GM10248 (cell line): ENCODE measurements at regions of chr2 and their contacts with region 1.

Region 1: DNA sequence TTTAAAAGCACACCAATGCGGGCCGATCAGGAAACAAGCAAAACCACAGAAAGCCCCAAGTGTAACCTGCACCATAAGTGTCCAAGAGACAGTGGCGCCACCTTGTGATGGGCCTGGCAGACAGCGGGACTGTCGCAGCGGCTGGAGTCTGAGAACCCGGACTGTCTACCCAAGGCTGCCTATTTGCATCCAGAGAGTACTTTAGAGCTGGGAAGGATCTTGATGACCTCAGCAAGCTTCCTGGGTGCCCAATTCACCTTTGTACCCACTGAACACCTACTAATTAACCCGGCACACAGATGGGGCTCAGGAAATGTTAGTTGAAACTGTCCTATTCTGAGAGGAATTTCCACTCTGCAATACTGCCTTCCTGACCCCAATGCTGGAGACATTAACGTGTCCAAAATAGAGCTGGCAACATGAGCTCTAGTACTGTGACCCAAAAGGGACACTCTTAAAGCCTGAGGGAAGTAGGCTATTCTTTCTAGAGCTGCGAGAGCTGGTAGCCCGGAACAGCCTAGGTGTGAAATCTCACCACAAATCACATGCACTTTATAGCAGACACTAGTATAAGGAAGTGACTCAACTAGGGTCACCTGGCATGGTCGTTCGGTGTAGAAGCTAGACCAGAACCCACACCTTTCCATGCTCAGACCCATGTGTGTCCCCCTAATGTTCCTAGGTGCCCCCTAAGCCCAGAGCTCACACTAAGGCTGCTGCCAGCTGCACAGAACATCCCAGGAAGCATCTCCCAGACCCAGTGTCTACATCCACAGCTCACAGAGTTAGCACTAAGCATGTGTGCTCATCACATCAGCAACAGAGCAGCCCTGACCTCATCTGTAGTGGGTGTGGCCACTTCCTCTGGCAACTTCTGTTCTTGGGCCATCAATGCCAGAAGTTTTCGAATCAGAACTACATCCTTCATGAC is 25.4 kb downstream of the POLR1A start:
- DNase-seq: peak; percentile 75
- CTCF ChIP-seq: peak; percentile 90

Region 2: GRCh38 chr2:85813982-85814801 is 266.1 kb before region 1 on chr2:
- CTCF ChIA-PET with region 1: interaction called, 13 read pairs
- POLR2A ChIA-PET with region 1: no interaction called
- DNase-seq: peak; percentile 89
- CTCF ChIP-seq: peak; percentile 92

Region 3: GRCh38 chr2:85852937-85853498 is 227.2 kb before region 1 on chr2:
- CTCF ChIA-PET with region 1: interaction called, 14 read pairs
- POLR2A ChIA-PET with region 1: no interaction called
- DNase-seq: no peak
- CTCF ChIP-seq: no peak

Region 4: DNA sequence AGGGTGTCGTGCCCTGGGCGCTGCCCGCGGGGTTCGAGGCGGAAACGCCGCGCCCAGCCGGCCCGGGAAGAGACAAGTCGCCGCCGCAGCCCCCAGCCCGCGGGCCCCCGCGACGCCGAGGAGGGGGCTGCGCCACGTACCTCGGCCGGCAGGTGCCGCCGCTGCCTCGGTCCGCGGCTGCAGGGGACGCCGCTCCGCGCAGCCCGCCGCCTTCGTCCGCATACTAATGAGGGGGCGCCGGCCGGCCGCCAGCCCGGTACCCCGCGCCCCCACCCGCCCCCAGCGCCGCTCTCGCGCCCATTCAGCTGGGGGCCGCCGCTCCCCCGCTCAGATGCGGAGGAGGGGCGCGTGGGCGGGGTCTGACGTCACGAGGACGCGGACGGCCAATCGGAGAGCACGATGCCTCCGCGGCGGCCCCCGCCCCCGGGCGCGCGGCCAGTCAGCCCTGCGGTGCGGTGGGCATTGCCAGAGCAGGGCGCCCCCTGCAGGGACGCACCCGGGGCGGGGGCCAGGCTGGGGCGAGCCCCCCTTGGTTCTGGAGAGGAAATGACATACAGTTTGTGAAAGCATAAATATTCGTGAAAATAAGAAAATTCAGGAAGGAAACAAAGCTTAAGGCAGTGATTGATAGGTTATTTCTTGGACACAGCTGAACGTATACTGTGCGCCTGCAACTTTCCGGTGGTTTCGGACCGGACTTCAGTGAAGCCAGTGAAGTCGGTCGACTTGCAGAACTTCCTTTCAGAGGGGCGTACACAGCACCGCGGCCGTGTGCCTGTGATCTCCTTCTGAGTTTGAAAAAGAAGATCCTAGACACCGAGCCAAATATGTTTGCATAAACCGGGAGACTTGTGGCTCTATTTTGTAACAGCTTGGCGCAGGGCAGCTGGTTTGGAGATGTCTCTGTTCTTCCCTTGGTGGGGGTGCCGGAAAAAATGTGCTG is 191.3 kb before region 1 on chr2 and contains the start of gene ST3GAL5:
- CTCF ChIA-PET with region 1: interaction called, 96 read pairs
- POLR2A ChIA-PET with region 1: no interaction called
- DNase-seq: peak; percentile 94
- CTCF ChIP-seq: peak; percentile 78

Region 5: DNA sequence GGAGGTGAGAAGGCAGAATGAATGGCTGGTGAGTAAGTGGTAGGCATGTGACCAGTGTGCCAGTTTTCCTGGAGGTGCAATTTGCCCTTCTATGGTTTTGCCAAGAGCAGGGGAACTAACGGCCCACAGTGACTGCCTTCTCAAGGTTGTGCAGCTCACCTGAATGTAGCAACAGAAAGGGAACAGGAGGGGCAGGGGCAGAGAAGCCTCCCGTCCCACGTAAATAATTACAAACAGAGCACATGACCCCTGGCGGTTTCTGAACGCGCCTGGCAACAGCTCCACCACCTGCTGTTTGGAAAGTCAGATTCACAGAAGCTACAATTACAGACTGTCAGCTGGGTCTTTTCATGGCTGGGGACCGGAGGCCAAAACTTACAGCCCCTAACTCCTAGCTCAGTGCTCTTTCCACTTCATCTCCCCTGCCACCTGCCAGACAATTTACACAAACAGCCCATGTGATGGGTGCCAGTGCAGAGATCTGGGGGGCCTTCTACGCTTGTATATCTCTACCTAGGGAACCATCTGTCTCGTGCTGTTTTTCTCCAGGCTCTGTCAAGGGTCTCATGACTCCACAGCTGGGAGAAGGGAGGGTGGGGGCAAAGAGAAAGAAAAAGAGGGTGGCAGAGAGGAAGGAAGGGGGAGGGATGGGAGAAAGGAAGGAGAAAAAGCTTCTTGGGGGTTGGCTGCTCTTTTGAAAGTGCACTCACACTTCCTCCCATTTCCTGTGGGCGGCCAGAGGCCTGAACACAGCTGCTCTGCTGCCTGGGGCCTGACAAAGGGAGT is 44.2 kb before region 1 on chr2:
- CTCF ChIA-PET with region 1: interaction called, 33 read pairs
- POLR2A ChIA-PET with region 1: no interaction called
- DNase-seq: peak; percentile 87
- CTCF ChIP-seq: peak; percentile 51

Region 6: GRCh38 chr2:86062043-86062442 is 18.2 kb before region 1 on chr2:
- CTCF ChIA-PET with region 1: interaction called, 40 read pairs
- POLR2A ChIA-PET with region 1: no interaction called
- DNase-seq: no peak
- CTCF ChIP-seq: no peak